ENCODE measurements at regions of chr7 and their contacts with region 1.

Region 1: DNA sequence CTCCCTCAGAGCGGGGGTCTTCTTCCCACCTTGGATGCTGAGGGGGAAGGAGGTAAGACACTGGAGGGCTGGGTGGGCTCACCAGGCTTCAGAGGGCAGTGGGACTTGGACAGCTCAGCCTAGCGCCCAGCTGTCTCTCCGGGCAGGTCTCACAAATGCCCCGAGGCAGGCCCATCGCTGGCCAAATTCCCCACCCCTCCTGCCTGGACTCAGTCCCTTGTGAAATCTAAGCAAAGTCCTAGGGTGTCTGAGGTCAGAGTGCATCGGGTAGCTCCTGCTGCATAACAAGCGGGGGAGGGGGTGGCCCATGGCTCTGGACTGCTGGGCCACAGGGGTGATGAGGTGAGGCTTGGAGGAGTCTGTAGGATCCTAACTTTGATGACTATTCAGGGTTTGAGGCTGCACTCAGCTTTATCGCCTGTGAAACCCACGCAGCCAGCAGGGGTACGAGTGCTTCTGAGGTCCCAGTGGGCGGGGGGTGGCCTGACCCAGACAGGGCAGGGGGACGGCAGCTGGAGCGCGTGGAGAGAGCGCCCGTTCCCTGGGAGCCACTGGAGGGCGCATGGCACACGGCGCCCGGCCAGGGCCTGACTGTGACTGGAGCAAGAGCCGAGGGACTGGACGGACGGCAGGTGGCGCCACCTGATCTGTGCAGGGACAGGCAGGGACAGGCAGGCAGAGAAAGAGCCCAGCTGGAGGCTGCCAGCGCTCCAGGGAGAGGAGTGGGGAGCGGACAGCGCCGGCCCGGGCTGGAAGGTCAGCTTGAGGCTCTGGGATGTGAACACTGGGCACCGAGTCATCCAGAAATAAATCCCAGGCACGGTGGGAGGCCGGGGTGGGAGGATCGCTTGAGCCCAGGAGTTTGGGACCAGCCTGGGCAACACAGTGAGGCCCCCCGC is 10.0 kb downstream of the CYP2W1 start:
- DNase-seq: peak; percentile 81 to 97
- H3K4me3 ChIP-seq: no peak overlapping the region
- H3K27ac ChIP-seq: no peak overlapping the region
- H3K4me1 ChIP-seq: peaks cover 0 to 3% of the 10 kb centered on the region in 2 donors
- H3K27me3 ChIP-seq: peaks cover 16% of the 10 kb centered on the region
- CTCF ChIP-seq: peak; percentile 100

Region 2: DNA sequence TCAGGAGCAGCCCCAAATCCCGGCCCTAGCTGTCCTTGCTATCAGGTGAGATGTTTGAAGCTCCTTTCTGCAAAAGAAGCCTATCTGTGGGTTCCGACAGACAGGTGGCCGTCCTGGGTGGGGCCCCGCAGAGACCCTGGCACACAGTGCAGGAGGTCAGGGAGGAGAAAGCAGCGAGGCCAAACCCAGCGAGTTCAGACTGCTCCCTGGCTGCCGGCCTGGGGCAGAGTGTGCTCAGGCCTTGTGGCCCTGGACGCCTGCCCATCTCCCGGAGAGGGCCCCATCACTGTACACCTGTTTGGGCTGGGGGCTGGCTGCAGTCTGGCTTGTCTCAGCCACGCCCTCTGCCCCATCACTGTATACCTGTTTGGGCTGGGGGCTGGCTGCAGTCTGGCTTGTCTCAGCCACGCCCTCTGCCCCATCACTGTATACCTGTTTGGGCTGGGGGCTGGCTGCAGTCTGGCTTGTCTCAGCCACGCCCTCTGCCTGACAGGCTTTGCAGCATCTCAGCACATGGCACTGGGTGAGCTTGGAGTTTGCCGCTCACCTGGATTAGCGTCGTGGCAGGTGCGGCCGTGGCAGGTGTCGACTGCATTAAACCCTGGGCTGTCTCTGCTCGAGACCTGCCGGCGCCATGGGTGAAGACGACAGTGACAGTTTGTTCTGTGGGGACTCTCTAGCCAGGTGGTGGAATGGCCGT is 254.1 kb before region 1 on chr7:
- intact Hi-C with region 1: no loop called
- DNase-seq: no peak
- H3K4me3 ChIP-seq: no peak overlapping the region
- H3K27ac ChIP-seq: no peak overlapping the region
- H3K4me1 ChIP-seq: no peaks in the 10 kb centered on the region
- H3K27me3 ChIP-seq: no peaks in the 10 kb centered on the region
- CTCF ChIP-seq: no peak

Region 3: GRCh38 chr7:1065263-1066260 is 72.6 kb after region 1 on chr7:
- intact Hi-C with region 1: loop called (anchors 1 kb)
- DNase-seq: peak; percentile 49 to 89
- H3K4me3 ChIP-seq: peak overlapping the region; percentile 30 to 37
- H3K27ac ChIP-seq: no peak overlapping the region
- H3K4me1 ChIP-seq: peaks cover 0 to 7% of the 10 kb centered on the region in 2 donors
- H3K27me3 ChIP-seq: no peaks in the 10 kb centered on the region
- CTCF ChIP-seq: peak; percentile 90 to 97 (median 97)

Region 4: DNA sequence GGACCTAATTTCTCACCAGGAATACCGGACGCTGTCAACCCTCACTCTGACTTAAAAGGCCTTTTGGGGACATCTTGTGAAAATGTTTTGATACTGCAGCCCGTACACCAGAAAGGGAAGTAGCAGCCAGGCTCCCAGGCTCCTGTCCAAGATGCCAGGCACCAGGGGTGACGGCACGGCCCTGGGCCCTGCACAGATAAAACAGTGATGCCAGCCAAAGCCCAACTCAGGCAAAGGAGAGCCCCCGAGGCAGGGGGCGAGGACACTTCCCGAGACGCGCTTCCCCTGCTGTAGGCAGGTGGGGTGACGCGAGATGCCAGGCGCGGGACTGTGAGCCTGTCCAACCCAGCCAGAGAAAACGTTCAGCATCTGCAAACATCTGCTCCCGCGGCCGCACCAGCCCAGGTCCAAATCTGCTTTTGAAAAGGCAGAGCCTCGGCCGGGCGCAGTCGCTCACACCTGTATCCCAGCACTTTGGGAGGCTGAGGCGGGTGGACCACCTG is 151.4 kb after region 1 on chr7:
- intact Hi-C with region 1: loop called (anchors 2 kb)
- DNase-seq: peak in 1 of 2 donors; percentile 74
- H3K4me3 ChIP-seq: no peak overlapping the region
- H3K27ac ChIP-seq: no peak overlapping the region
- H3K4me1 ChIP-seq: peaks cover 0 to 3% of the 10 kb centered on the region in 2 donors
- H3K27me3 ChIP-seq: no peaks in the 10 kb centered on the region
- CTCF ChIP-seq: peak; percentile 37 to 71 (median 42)

Region 5: DNA sequence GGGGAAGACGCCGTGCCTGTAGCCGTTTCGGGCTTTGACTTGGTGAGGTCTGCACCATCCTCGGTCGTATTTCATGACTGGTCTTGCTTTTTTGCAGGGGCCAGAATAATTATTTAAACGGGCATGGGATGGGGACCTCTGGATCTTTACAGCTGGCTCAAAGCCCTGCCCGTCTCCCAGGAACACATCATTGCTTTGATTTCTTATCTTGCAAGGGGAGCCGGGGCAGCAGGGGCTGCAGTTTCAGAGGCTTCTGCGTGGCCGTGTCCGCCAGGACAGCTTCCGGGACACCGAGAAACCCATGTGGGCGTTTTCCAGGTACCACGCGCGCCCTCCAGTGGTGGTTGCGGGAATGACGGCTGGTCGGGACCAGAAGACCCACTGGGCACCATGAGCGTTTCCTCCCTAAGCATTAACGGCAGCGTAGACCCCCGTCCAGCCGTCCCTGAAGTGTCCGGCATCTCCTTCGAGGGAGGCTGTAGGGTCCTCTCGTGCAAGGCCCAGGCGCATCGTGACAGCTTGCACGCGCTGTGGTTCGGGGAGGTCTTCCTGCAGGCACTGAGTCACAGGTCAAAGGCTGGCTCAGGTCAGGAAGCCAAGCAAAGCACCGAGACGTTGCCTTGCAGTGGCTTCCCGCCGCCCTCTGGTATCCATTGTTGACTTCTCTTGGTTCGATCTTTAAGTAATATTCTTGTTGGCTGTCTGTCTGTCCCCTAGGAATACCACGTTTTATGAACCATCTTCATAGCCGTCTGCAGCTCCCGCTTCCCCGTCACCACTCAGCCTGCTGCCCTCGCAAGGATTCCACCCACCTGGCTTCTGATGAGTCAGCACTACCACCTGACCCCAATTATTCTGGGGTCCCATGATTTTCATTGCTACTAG is 183.3 kb after region 1 on chr7:
- intact Hi-C with region 1: loop called (anchors 5 kb)
- DNase-seq: peak in 1 of 2 donors; percentile 88
- H3K4me3 ChIP-seq: peak overlapping the region; percentile 1 to 46
- H3K27ac ChIP-seq: no peak overlapping the region
- H3K4me1 ChIP-seq: no peaks in the 10 kb centered on the region
- H3K27me3 ChIP-seq: no peaks in the 10 kb centered on the region
- CTCF ChIP-seq: peak; percentile 84 to 92 (median 90)